ENCODE measurements at regions of chr3 and their contacts with region 1.

Region 1: DNA sequence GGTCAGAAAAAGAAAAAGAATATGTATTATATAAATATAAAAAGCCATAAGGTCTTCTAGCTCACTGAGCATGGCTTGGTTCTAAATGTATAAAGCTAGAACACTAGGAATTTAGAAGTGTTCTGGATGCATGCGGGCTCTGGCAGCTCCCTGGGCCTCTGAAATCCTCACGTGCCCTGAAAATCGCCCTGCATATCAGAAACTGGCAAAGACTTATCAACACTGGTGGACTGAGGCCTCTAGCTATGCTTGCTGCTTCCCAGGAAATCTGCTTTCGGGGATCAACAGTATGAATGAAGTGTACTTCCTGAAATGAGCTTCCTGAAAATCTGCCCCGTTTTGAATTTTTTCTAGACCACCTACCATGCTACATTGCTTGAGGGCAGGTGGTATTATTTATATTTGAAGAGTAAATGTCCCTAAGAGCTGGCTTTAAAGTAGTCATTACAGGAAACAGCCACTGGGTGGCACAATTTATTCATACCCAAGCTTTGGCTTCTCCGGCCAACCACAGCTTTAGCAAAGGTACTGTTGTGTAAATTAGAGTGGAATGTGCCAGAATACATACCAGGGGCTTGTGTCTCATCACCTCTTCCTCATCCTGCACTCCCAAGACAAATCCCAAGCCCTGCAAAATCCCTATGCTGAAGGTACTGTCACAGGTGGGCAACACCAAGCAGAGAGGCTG is 17.7 kb downstream of the CRTAP start:
- DNase-seq: peak; percentile 75
- H3K4me3 Mint-ChIP-seq: no peak overlapping the region
- H3K27ac Mint-ChIP-seq: no peak overlapping the region
- H3K4me1 Mint-ChIP-seq: no peaks in the 10 kb centered on the region
- H3K27me3 Mint-ChIP-seq: no peaks in the 10 kb centered on the region
- CTCF ChIP-seq: peak; percentile 71

Region 2: GRCh38 chr3:33113772-33114621 is 17.5 kb before region 1 on chr3 and contains the start of gene CRTAP:
- CTCF ChIA-PET with region 1: interaction called, 20 read pairs
- POLR2A ChIA-PET with region 1: interaction called, 13 read pairs
- intact Hi-C with region 1: no loop called
- DNase-seq: peak; percentile 94
- H3K4me3 Mint-ChIP-seq: peak within 1 kb of the TSS; percentile 83
- H3K27ac Mint-ChIP-seq: peak within 1 kb of the TSS; percentile 79
- H3K4me1 Mint-ChIP-seq: peaks cover 30% of the 10 kb centered on the region
- H3K27me3 Mint-ChIP-seq: no peaks in the 10 kb centered on the region
- CTCF ChIP-seq: no peak
- total RNA-seq, gene CRTAP: 179 and 182 TPM in 2 replicates

Region 3: GRCh38 chr3:33250712-33251111 is 119.2 kb after region 1 on chr3:
- CTCF ChIA-PET with region 1: interaction called, 4 read pairs
- POLR2A ChIA-PET with region 1: no interaction called
- intact Hi-C with region 1: loop called (anchors 1 kb)
- DNase-seq: no peak
- H3K4me3 Mint-ChIP-seq: no peak overlapping the region
- H3K27ac Mint-ChIP-seq: no peak overlapping the region
- H3K4me1 Mint-ChIP-seq: no peaks in the 10 kb centered on the region
- H3K27me3 Mint-ChIP-seq: peaks cover 18% of the 10 kb centered on the region
- CTCF ChIP-seq: no peak

Region 4: DNA sequence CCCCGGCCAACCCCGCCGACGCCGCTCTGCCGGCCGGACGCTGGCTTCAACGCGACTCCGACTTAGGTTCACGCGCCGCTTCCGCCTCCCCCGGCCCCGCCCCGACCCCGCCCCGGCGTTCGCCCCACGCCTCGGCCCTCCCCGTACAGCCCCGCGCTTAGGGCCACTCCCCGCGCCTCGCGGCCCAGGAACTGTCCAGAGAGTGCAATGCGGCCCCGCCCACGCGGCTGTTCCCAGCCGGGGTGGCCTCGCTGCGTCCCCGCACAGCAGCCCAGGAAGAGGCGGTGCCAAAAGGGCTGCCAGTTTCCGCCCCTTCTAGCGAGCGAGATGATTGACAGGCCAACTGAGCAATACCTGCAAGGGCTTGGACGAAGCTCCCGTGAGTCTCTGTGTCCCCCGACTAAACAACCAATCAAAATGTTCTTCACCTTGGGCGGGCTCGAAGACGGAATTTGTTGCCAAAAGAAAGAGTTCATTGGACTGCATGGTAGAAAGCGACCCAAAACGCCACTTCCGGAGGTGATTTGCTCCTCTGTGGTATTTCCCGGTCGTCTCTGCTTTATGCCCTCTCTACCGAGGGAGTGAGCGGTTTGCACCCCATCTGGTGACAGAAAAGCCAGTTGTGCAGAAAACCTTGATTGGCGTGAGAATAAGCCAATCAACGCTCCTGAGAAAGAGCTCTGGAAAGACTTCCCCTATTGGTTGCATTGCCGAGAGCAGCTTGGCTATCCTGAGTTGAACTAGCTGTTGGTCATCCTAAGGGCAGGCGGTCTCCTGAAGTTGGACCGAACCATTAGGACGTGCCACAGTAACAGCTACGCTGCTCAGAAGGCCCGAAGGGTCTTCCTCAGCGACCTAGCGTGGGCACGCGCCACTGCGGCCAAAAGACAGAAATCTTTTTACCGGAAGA is 309.1 kb after region 1 on chr3 and contains the start of gene UBP1:
- CTCF ChIA-PET with region 1: no interaction called
- POLR2A ChIA-PET with region 1: interaction called, 3 read pairs
- intact Hi-C with region 1: loop called (anchors 5 kb)
- DNase-seq: peak; percentile 100
- H3K4me3 Mint-ChIP-seq: peak within 1 kb of the TSS; percentile 99
- H3K27ac Mint-ChIP-seq: peak within 1 kb of the TSS; percentile 99
- H3K4me1 Mint-ChIP-seq: peaks cover 14% of the 10 kb centered on the region
- H3K27me3 Mint-ChIP-seq: no peaks in the 10 kb centered on the region
- CTCF ChIP-seq: no peak
- total RNA-seq, gene UBP1: 55.6 and 72.6 TPM in 2 replicates